Caco-2 (cell line): ENCODE measurements at regions of chr2 and their contacts with region 1.

Region 1: GRCh38 chr2:41847744-41848441 is 199.9 kb upstream of the PKDCC start:
- DNase-seq: peak in 1 of 2 experiments; percentile 65
- H3K4me3 ChIP-seq: no peak overlapping the region
- H3K4me3 Mint-ChIP-seq: no peak overlapping the region
- H3K27ac Mint-ChIP-seq: no peak overlapping the region
- H3K4me1 ChIP-seq: peaks cover 9% of the 10 kb centered on the region
- H3K4me1 Mint-ChIP-seq: peaks cover 15% of the 10 kb centered on the region
- H3K27me3 ChIP-seq: no peaks in the 10 kb centered on the region
- H3K27me3 Mint-ChIP-seq: no peaks in the 10 kb centered on the region
- CTCF ChIP-seq: no peak

Region 2: GRCh38 chr2:40507432-40507831 is 1340.5 kb before region 1 on chr2:
- CTCF ChIA-PET with region 1: no interaction called
- POLR2A ChIA-PET with region 1: no interaction called
- intact Hi-C with region 1: no loop called
- DNase-seq: no peak
- H3K4me3 ChIP-seq: no peak overlapping the region
- H3K4me3 Mint-ChIP-seq: no peak overlapping the region
- H3K27ac Mint-ChIP-seq: no peak overlapping the region
- H3K4me1 ChIP-seq: no peaks in the 10 kb centered on the region
- H3K4me1 Mint-ChIP-seq: no peaks in the 10 kb centered on the region
- H3K27me3 ChIP-seq: no peaks in the 10 kb centered on the region
- H3K27me3 Mint-ChIP-seq: peaks cover 7% of the 10 kb centered on the region
- CTCF ChIP-seq: no peak

Region 3: GRCh38 chr2:41782306-41783158 is 65.4 kb before region 1 on chr2:
- CTCF ChIA-PET with region 1: no interaction called
- POLR2A ChIA-PET with region 1: no interaction called
- intact Hi-C with region 1: no loop called
- DNase-seq: peak in 1 of 2 experiments; percentile 61
- H3K4me3 ChIP-seq: no peak overlapping the region
- H3K4me3 Mint-ChIP-seq: no peak overlapping the region
- H3K27ac Mint-ChIP-seq: no peak overlapping the region
- H3K4me1 ChIP-seq: no peaks in the 10 kb centered on the region
- H3K4me1 Mint-ChIP-seq: peaks cover 6% of the 10 kb centered on the region
- H3K27me3 ChIP-seq: no peaks in the 10 kb centered on the region; the same call in none of the 2 replicates
- H3K27me3 Mint-ChIP-seq: peaks cover 11% of the 10 kb centered on the region
- CTCF ChIP-seq: peak; percentile 78 to 92

Region 4: GRCh38 chr2:41859615-41860520 is 12.0 kb after region 1 on chr2:
- CTCF ChIA-PET with region 1: no interaction called
- POLR2A ChIA-PET with region 1: interaction called, 3 read pairs
- intact Hi-C with region 1: loop called (anchors 1 kb)
- DNase-seq: peak; percentile 65 to 75
- H3K4me3 ChIP-seq: no peak overlapping the region
- H3K4me3 Mint-ChIP-seq: peak overlapping the region; percentile 74
- H3K27ac Mint-ChIP-seq: peak overlapping the region; percentile 98
- H3K4me1 ChIP-seq: peaks cover 50% of the 10 kb centered on the region
- H3K4me1 Mint-ChIP-seq: peaks cover 28% of the 10 kb centered on the region
- H3K27me3 ChIP-seq: no peaks in the 10 kb centered on the region
- H3K27me3 Mint-ChIP-seq: no peaks in the 10 kb centered on the region
- CTCF ChIP-seq: no peak